Adrenal gland (tissue), 19 donors: ENCODE measurements at regions of chr3 and their contacts with region 1.

Region 1: DNA sequence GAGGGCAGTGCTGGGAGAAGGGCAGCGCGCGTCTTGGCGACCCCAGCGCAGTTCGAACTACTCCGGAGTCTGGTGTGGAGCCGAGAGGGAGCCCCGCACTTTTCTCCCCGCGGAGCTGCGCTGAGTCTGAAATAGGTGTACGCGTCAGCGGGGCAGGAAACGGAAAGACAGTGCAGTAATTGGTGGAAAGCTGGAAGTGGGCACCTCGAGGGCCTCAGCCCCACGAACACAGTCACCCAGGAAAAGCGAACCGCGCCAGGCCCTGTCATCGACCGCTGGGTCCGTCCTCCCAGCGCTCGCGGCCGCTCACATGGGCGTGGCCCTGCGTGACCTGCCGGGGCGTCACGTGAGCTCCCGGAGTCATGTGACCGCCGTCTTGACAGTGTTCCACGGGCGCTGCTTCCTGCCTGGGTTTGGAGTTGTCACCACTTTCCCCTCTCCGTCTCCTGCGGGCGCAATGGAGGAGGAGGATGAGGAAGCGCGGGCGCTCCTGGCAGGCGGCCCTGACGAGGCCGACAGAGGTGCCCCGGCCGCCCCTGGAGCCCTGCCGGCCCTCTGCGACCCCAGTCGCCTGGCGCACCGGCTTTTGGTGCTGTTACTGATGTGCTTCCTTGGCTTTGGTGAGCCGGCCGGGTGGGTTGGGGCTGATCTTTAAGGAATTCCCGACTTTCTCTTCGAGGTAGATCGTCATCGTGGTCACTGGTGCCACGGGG is at the start of gene MFSD1:
- DNase-seq: peak; percentile 95 to 98 (median 96)
- H3K4me3 ChIP-seq: peak within 1 kb of the TSS; percentile 43 to 97 (median 94)
- H3K27ac ChIP-seq: peak within 1 kb of the TSS; percentile 40 to 95 (median 63)
- H3K4me1 ChIP-seq: peaks cover 0 to 39% of the 10 kb centered on the region in 2 donors
- H3K27me3 ChIP-seq: no peaks in the 10 kb centered on the region
- CTCF ChIP-seq: no peak
- POLR2A ChIP-seq: peak; percentile 69 to 74
- total RNA-seq, gene MFSD1: 38.8 to 118 (median 77.3) TPM

Region 2: GRCh38 chr3:158659454-158660237 is 142.2 kb before region 1 on chr3:
- intact Hi-C with region 1: loop called in 1 of 2 experiments (anchors 10 kb)
- DNase-seq: peak; percentile 59 to 90 (median 73)
- H3K4me3 ChIP-seq: no peak overlapping the region
- H3K27ac ChIP-seq: peak overlapping the region in 2 of 5 donors; percentile 30 to 66
- H3K4me1 ChIP-seq: no peaks in the 10 kb centered on the region
- H3K27me3 ChIP-seq: no peaks in the 10 kb centered on the region
- CTCF ChIP-seq: peak; percentile 45 to 78 (median 72)
- POLR2A ChIP-seq: no peak

Region 3: GRCh38 chr3:159008401-159008800 is 206.5 kb after region 1 on chr3:
- intact Hi-C with region 1: no loop called
- DNase-seq: no peak
- H3K4me3 ChIP-seq: no peak overlapping the region
- H3K27ac ChIP-seq: no peak overlapping the region
- H3K4me1 ChIP-seq: no peaks in the 10 kb centered on the region
- H3K27me3 ChIP-seq: no peaks in the 10 kb centered on the region
- CTCF ChIP-seq: no peak
- POLR2A ChIP-seq: no peak